Mammary epithelial cell (primary cell): ENCODE measurements at regions of chr4 and their contacts with region 1.

Region 1: GRCh38 chr4:52038103-52038912 is at the start of gene SGCB:
- DNase-seq: peak; percentile 37
- H3K4me3 ChIP-seq: peak within 1 kb of the TSS; percentile 71 to 90 (median 88)
- H3K27ac ChIP-seq: no peak within 1 kb of the TSS
- H3K4me1 ChIP-seq: peaks cover 6% of the 10 kb centered on the region
- H3K27me3 ChIP-seq: no peaks in the 10 kb centered on the region
- CTCF ChIP-seq: no peak
- total RNA-seq, gene SGCB: 23.8 to 43.8 TPM

Region 2: GRCh38 chr4:51842554-51843308 is 195.6 kb before region 1 on chr4 and contains the start of gene DCUN1D4:
- CTCF ChIA-PET with region 1: no interaction called
- dilution Hi-C with region 1: no loop called
- in situ Hi-C with region 1: no loop called
- intact Hi-C with region 1: loop called (anchors 5 kb)
- DNase-seq: peak; percentile 100
- H3K4me3 ChIP-seq: peak within 1 kb of the TSS; percentile 83 to 94 (median 85)
- H3K27ac ChIP-seq: peak within 1 kb of the TSS; percentile 62
- H3K4me1 ChIP-seq: peaks cover 4% of the 10 kb centered on the region
- H3K27me3 ChIP-seq: no peaks in the 10 kb centered on the region
- CTCF ChIP-seq: peak in 1 of 2 donors; percentile 45
- total RNA-seq, gene DCUN1D4: 43.5 to 66.5 TPM

Region 3: DNA sequence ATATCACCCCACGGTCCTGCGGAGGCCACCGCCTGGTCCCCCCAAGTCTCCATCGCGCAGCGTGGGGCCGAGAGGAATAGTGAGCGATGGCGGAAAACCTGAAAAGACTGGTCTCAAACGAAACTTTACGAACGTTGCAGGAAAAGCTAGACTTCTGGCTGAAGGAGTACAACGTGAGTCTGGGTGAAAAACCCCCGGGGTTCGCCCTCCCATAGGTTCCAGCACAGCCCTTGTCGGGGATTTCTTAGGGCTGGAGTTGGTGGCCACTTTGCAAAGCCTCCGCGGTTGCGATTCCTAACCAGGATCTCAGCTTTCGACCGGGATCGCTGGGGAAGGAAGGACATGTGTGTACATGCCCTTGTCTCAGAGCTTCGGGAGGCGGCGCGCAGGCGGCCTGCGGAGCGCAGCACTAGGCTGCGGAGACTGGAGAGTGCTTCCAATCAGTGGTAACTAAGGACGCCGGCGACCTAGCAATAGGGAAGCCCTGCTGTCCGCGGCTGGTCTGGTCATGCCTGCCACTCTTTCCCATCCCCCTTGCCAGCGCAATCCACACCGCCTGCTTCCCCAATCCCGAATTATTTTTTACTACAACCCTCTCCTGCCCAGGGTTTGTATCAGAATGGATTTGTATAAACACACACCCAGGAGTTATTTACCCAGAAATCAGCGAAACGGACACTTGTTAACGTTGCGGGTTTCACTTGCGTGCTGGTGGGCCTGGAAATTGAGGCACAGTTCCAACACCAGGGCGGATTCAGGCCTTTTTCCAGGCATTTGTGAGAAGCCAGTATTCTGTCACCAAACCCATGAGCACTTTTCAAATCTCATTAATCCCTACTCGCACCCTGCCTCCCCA is 13.5 kb after region 1 on chr4:
- CTCF ChIA-PET with region 1: no interaction called
- dilution Hi-C with region 1: no loop called
- in situ Hi-C with region 1: no loop called
- intact Hi-C with region 1: loop called (anchors 1 kb)
- DNase-seq: peak; percentile 97
- H3K4me3 ChIP-seq: peak overlapping the region; percentile 47 to 68 (median 60)
- H3K27ac ChIP-seq: peak overlapping the region; percentile 79
- H3K4me1 ChIP-seq: peaks cover 16% of the 10 kb centered on the region
- H3K27me3 ChIP-seq: no peaks in the 10 kb centered on the region
- CTCF ChIP-seq: no peak

Region 4: DNA sequence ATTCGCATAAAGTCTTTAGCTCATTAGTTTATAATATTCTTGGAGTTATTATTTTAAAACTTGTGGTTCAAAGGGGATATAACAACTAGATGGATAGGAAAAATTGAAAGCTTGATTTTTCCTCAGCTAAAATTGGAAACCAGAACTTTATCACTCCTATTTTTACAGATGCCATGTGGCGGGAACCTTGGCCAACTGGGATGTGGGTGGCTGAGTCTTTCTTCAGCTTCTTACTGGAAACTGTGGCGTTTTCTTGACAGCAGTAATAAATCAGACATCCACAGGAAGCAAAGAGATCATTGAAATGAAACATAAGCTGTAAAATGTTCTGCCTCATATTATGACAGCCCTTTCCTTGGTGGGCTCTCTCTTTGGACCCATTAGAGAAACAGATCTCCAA is 96.9 kb after region 1 on chr4:
- CTCF ChIA-PET with region 1: no interaction called
- dilution Hi-C with region 1: no loop called
- in situ Hi-C with region 1: no loop called
- intact Hi-C with region 1: loop called (anchors 5 kb)
- DNase-seq: no peak
- H3K4me3 ChIP-seq: no peak overlapping the region
- H3K27ac ChIP-seq: no peak overlapping the region
- H3K4me1 ChIP-seq: no peaks in the 10 kb centered on the region
- H3K27me3 ChIP-seq: no peaks in the 10 kb centered on the region
- CTCF ChIP-seq: no peak

Region 5: GRCh38 chr4:52172166-52172565 is 133.9 kb after region 1 on chr4:
- CTCF ChIA-PET with region 1: no interaction called
- dilution Hi-C with region 1: no loop called
- in situ Hi-C with region 1: no loop called
- intact Hi-C with region 1: loop called (anchors 5 kb)
- DNase-seq: peak; percentile 9
- H3K4me3 ChIP-seq: no peak overlapping the region
- H3K27ac ChIP-seq: no peak overlapping the region
- H3K4me1 ChIP-seq: no peaks in the 10 kb centered on the region
- H3K27me3 ChIP-seq: no peaks in the 10 kb centered on the region
- CTCF ChIP-seq: peak; percentile 46 to 52

Region 6: DNA sequence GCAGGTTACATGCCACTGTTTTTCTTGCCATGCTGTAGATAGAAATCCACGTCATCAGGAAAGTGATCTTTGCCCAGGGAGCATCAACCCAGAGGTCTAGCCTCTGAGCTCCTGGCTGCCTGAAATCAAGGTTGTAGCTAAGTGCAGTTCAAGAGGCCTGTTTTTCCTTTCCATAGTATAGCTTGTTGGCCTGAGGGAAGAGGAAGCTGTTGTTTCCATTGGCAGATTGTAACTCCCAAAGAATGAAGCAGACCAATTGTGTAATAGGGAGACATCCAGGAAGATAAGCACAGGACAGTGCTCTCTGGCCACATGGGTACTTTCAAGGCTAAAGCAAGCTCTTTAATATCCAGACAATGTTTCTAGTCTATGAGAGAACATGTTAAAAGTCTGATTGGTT is 187.0 kb after region 1 on chr4:
- CTCF ChIA-PET with region 1: no interaction called
- dilution Hi-C with region 1: no loop called
- in situ Hi-C with region 1: no loop called
- intact Hi-C with region 1: no loop called
- DNase-seq: no peak
- H3K4me3 ChIP-seq: no peak overlapping the region
- H3K27ac ChIP-seq: no peak overlapping the region
- H3K4me1 ChIP-seq: no peaks in the 10 kb centered on the region
- H3K27me3 ChIP-seq: no peaks in the 10 kb centered on the region
- CTCF ChIP-seq: no peak